Natural killer cell (primary cell): ENCODE measurements at regions of chr5 and their contacts with region 1.

Region 1: DNA sequence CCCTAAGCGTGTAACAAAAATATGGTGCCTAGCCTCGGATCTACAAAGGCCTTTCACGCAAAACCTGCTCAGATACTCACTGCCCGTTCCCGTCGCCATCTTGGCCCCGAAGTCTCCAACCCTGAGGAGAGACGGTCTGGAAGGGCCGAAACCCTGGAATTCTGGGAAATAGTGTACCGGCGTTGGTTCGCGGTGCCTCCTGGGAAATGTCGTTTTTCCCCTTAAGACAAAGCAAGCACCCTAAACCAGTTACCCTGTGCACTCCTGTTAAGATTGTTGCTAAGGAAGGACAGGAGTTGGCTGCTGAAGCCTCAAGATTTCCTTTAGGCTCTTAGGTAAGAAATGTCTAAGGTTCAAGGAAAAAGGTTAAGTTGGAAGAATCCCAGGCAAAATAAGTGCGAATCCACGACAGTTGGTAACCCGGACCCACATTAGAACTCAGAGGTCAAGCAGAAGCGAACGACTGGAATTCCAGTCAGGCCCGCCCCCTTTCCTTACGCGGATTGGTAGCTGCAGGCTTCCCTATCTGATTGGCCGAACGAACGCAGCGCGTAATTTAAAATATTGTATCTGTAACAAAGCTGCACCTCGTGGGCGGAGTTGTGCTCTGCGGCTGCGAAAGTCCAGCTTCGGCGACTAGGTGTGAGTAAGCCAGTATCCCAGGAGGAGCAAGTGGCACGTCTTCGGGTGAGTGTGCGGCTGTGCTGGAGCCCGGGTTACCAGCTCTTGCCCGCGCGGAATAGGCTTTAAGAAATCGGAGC is at the starts of genes BRD8 and KIF20A:
- DNase-seq: peak; percentile 85 to 94
- ATAC-seq: peak; percentile 93 to 96 (median 94)
- H3K4me3 ChIP-seq: peak within 1 kb of the TSS; percentile 81
- H3K4me3 Mint-ChIP-seq: no peak within 1 kb of the TSS
- H3K27ac ChIP-seq: peak within 1 kb of the TSS; percentile 48
- H3K27ac Mint-ChIP-seq: no peak within 1 kb of the TSS
- H3K4me1 ChIP-seq: peaks cover 18% of the 10 kb centered on the region
- H3K4me1 Mint-ChIP-seq: peaks cover 0 to 1% of the 10 kb centered on the region in 2 donors
- H3K27me3 ChIP-seq: no peaks in the 10 kb centered on the region
- H3K27me3 Mint-ChIP-seq: no peaks in the 10 kb centered on the region
- CTCF ChIP-seq: no peak
- total RNA-seq, gene BRD8: 26.1 to 36.5 (median 34.1) TPM
- total RNA-seq, gene KIF20A: 0.15 to 1.5 (median 0.61) TPM

Region 2: DNA sequence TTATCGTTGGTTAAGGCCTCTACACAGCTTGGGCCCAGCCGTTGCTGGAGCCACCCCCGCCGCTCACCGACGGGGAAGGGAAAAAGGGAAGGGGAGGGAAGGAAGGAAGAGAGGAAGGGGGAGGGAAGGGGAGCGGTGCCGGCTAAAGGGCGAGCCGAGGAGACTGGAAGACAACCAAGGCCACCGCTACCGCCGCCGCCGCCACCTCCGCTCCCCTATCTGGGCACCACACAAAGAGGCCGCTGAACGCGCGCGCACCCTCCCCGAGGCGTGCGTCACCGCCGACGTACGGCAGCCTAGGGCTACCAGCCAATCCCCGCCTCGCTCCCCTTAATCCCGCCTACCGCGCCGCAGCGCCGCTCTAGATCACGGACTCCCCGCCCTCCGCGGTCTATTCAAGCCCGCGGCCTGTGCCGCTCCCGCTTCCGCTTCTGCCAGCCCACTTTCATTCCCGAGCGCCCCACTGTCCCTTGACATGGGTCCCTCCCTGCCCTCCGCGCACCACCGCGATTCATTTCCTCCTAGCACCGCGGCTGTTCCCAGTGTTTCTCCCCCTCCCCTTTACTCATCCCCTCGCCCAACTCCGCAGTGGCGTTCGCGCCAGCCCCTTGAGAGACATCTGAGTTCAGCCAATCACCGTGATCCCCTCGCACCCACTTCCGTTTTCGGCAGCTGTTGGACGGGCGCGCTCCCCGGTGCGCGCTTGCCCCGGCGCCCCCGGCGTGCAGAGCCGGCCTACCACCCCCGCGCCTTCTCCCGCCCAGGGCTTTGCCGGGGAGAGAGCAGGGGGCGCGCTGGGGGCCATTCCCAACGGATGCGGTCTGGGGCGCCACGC is 424.4 kb before region 1 on chr5 and contains the start of gene HNRNPA0:
- intact Hi-C with region 1: loop called (anchors 5 kb)
- DNase-seq: peak; percentile 96 to 99
- ATAC-seq: peak; percentile 81 to 94 (median 85)
- H3K4me3 ChIP-seq: peak within 1 kb of the TSS; percentile 77
- H3K4me3 Mint-ChIP-seq: peak within 1 kb of the TSS; percentile 97
- H3K27ac ChIP-seq: peak within 1 kb of the TSS; percentile 99
- H3K27ac Mint-ChIP-seq: peak within 1 kb of the TSS; percentile 100
- H3K4me1 ChIP-seq: peaks cover 14% of the 10 kb centered on the region
- H3K4me1 Mint-ChIP-seq: peaks cover 30 to 42% of the 10 kb centered on the region in 2 donors
- H3K27me3 ChIP-seq: no peaks in the 10 kb centered on the region
- H3K27me3 Mint-ChIP-seq: peaks cover 0 to 3% of the 10 kb centered on the region in 2 donors
- CTCF ChIP-seq: no peak
- total RNA-seq, gene HNRNPA0: 31.5 to 35.9 (median 33.5) TPM

Region 3: GRCh38 chr5:138213161-138214029 is 34.7 kb after region 1 on chr5 and contains the start of gene CDC23:
- intact Hi-C with region 1: loop called (anchors 1 kb)
- DNase-seq: peak; percentile 82 to 97
- ATAC-seq: peak; percentile 97
- H3K4me3 ChIP-seq: peak within 1 kb of the TSS; percentile 90
- H3K4me3 Mint-ChIP-seq: peak within 1 kb of the TSS; percentile 99
- H3K27ac ChIP-seq: peak within 1 kb of the TSS; percentile 73
- H3K27ac Mint-ChIP-seq: peak within 1 kb of the TSS; percentile 96 to 99
- H3K4me1 ChIP-seq: peaks cover 16% of the 10 kb centered on the region
- H3K4me1 Mint-ChIP-seq: peaks cover 15 to 26% of the 10 kb centered on the region in 2 donors
- H3K27me3 ChIP-seq: no peaks in the 10 kb centered on the region
- H3K27me3 Mint-ChIP-seq: no peaks in the 10 kb centered on the region
- CTCF ChIP-seq: no peak
- total RNA-seq, gene CDC23: 16.3 to 25.2 (median 24.6) TPM

Region 4: DNA sequence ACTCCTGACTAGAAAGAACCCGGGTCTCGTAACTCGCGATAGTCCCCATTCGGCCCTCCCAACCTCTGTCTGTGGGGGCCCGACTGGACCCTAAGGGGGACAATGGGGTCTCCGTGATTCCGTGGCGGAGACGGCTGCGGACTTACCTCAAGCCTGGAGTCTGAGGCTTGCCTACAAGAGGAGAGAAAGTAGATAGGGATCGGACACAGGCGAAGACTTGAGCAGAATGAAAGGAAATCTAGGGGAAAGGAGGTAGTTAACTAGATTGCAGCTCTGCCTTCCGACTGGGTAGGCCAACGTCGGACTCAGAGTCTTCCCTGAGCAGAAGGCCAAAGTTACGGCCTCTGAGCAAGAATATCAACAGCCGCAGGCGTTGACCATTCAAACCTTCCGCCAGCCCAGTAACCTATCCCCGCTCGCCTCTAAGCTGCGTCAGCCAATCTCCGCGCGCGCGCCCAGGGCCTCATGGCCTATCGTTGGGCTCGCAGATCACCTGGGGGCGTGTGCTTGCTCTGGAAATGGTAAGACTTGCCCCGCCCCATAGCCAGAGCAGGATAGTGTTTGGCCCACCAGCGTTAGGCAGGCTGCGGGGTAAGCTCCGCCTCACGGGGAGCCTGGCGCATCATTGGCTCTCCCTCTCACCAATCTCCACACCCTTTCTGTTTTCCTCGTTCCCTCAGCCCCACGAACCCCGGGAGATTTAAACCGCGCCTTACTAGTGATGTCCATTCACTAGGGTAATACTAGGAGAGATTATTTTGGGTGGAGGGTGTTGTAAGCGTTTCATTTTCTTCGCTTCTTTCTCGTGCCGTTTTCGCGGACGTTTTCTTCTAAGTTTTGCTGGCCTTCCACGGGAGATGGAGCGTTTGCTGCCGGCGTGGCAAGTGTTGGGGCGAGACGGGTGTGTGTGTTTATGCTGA is 153.0 kb after region 1 on chr5 and contains the start of gene CDC25C:
- intact Hi-C with region 1: loop called (anchors 1 kb)
- DNase-seq: peak; percentile 94 to 99
- ATAC-seq: peak; percentile 99 to 100 (median 99)
- H3K4me3 ChIP-seq: peak within 1 kb of the TSS; percentile 46
- H3K4me3 Mint-ChIP-seq: peak within 1 kb of the TSS; percentile 99
- H3K27ac ChIP-seq: peak within 1 kb of the TSS; percentile 37
- H3K27ac Mint-ChIP-seq: peak within 1 kb of the TSS; percentile 75 to 86
- H3K4me1 ChIP-seq: peaks cover 14% of the 10 kb centered on the region
- H3K4me1 Mint-ChIP-seq: peaks cover 15 to 17% of the 10 kb centered on the region in 2 donors
- H3K27me3 ChIP-seq: no peaks in the 10 kb centered on the region
- H3K27me3 Mint-ChIP-seq: no peaks in the 10 kb centered on the region
- CTCF ChIP-seq: no peak
- total RNA-seq, gene CDC25C: 0.47 to 0.48 TPM in 2 of 3 donors, not detected in the other

Region 5: DNA sequence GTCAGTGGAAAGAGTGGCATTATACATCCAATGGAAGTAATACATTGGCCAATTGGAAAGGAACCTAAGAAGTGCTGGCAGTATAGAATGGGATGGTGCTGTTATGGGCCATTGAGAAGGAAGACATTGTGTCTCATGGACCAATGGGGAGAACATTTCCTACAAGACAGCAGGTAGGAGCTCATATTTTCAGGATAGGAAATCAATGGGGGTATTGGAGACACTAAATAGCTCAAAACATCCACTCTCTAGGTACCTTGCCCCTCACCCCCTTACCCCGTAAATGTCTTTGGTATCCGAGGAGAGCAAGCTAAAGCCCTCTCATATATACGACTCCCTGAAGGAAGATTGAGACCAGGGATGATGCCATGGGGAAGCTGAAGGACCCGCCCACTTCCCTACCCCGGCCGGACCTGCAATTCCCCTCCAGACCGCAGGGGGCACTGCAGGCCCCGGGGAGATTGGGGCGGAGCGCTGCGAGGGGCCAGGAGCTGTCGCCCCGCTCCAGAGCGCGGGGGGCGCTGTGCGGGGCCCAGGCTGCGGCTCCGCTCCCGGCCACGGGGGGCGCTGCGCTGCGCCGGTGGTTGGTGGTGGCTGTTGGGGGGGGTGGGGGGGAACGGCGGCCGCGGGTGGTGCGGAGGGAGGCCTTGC is 173.5 kb after region 1 on chr5 and contains the start of gene KDM3B:
- intact Hi-C with region 1: loop called (anchors 5 kb)
- DNase-seq: peak; percentile 95 to 98
- ATAC-seq: peak; percentile 86 to 98 (median 87)
- H3K4me3 ChIP-seq: peak within 1 kb of the TSS; percentile 97
- H3K4me3 Mint-ChIP-seq: peak within 1 kb of the TSS; percentile 95
- H3K27ac ChIP-seq: peak within 1 kb of the TSS; percentile 97
- H3K27ac Mint-ChIP-seq: peak within 1 kb of the TSS; percentile 94 to 97
- H3K4me1 ChIP-seq: peaks cover 18% of the 10 kb centered on the region
- H3K4me1 Mint-ChIP-seq: peaks cover 44 to 45% of the 10 kb centered on the region in 2 donors
- H3K27me3 ChIP-seq: no peaks in the 10 kb centered on the region
- H3K27me3 Mint-ChIP-seq: no peaks in the 10 kb centered on the region
- CTCF ChIP-seq: peak; percentile 98
- total RNA-seq, gene KDM3B: 82.3 to 87.1 (median 82.3) TPM

Region 6: DNA sequence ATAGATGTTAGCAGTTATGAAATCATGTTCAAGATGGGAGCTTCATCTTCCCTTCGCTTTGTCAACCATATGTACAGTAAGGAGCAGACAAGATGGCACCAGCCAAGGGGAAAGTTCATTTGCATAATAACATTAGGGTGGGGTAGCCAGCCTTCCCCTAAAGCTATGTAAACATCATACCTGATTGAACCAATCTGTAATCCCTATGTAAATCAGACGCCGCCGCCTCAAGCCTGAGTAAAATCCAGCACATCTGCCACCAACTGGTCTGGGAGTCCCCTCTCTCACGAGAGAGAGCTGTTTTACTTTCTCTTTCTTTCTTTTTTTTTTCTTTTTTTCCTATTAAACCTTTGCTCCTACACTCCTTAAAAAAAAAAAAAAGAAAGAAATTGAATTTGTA is 229.3 kb after region 1 on chr5:
- intact Hi-C with region 1: loop called (anchors 1 kb)
- DNase-seq: peak in 1 of 2 donors; percentile 29
- ATAC-seq: no peak
- H3K4me3 ChIP-seq: no peak overlapping the region
- H3K4me3 Mint-ChIP-seq: no peak overlapping the region
- H3K27ac ChIP-seq: no peak overlapping the region
- H3K27ac Mint-ChIP-seq: peak overlapping the region; percentile 7 to 41
- H3K4me1 ChIP-seq: no peaks in the 10 kb centered on the region
- H3K4me1 Mint-ChIP-seq: peaks cover 0 to 5% of the 10 kb centered on the region in 2 donors
- H3K27me3 ChIP-seq: no peaks in the 10 kb centered on the region
- H3K27me3 Mint-ChIP-seq: no peaks in the 10 kb centered on the region
- CTCF ChIP-seq: no peak